ENCODE measurements at regions of chr12 and their contacts with region 1.

Region 1: DNA sequence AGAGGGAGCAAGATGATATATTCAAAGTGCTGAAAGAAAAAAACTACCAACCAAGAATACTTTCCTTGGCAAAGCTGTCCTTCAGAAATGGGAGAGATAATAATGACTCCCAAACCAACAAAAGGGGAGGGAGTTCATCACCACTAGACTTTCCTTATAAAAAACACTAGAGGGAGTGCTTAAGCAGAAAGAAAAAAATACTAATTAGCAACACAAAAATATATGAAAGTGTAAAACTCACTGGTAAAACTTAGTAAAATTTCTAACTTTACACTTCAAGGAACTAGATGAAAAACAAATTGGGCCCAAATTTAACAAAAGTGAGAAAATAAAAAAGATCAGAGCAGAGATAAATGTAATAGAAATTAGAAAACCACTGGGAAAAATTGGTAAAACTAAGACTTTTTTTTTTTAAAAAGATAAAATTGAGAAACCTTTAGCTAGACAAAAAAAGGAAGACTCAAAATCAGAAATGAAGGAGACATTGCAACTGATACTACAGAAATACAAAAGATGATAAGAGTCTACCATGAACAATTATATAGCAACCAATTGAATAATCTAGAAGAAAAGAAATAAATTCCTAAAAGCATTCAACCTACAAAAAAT is 60.4 kb upstream of the FAR2 start:
- DNase-seq: no peak
- ATAC-seq: no peak
- H3K4me3 ChIP-seq: no peak overlapping the region
- H3K27ac ChIP-seq: no peak overlapping the region
- H3K4me1 ChIP-seq: no peaks in the 10 kb centered on the region
- H3K27me3 ChIP-seq: no peaks in the 10 kb centered on the region
- CTCF ChIP-seq: peak; percentile 27 to 48

Region 2: GRCh38 chr12:29131539-29131938 is 42.8 kb after region 1 on chr12:
- intact Hi-C with region 1: no loop called
- DNase-seq: peak in 2 of 4 donors; percentile 14 to 33
- ATAC-seq: no peak
- H3K4me3 ChIP-seq: no peak overlapping the region
- H3K27ac ChIP-seq: peak overlapping the region in 1 of 2 donors; percentile 58
- H3K4me1 ChIP-seq: no peaks in the 10 kb centered on the region
- H3K27me3 ChIP-seq: no peaks in the 10 kb centered on the region
- CTCF ChIP-seq: no peak

Region 3: GRCh38 chr12:29317556-29318363 is 229.0 kb after region 1 on chr12:
- intact Hi-C with region 1: loop called in 1 of 2 experiments (anchors 5 kb)
- DNase-seq: peak in 2 of 4 donors; percentile 16 to 52
- ATAC-seq: peak; percentile 96
- H3K4me3 ChIP-seq: no peak overlapping the region
- H3K27ac ChIP-seq: no peak overlapping the region
- H3K4me1 ChIP-seq: peaks cover 0 to 8% of the 10 kb centered on the region in 2 donors
- H3K27me3 ChIP-seq: no peaks in the 10 kb centered on the region
- CTCF ChIP-seq: peak; percentile 55 to 68